Activated T-helper 1 cell treated with anti-CD3 and anti-CD28 coated beads, Interleukin-12 subunit alpha, Interleukin-12 subunit beta, Interleukin-2, Interleukin-4 antibody, amounts not matched to agents 30 ng/mL and 10 ng/mL and 1 ng/mL, durations not matched to agents 14 hours and 24 hours and 36 hours (primary cell): ENCODE measurements at regions of chr4 and their contacts with region 1.

Region 1: DNA sequence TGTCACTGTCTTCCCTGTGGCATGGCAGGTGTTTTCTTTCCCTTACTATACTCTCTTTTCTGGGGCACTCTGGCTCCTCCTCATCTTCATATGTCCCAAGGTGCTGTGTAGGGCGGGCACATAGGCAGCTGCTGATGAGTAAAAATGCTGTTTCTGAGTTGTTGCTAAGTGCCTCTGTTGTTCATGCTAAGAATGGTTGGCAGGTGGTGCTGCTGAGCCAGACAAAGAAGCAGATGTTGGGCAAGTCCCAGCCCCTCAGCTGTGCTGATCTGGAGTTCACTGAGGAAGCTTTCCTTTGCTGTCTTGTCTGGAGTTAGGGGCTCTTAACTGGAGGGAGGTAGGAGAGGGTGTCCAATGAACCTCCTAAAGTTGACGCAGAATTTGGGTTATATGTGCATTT is 40.6 kb downstream of the HADH start:
- DNase-seq: peak; percentile 69
- H3K4me3 Mint-ChIP-seq: peak overlapping the region; percentile 43
- H3K27ac Mint-ChIP-seq: peak overlapping the region; percentile 89
- H3K4me1 Mint-ChIP-seq: peaks cover 68% of the 10 kb centered on the region
- H3K27me3 Mint-ChIP-seq: no peaks in the 10 kb centered on the region

Region 2: GRCh38 chr4:108053251-108053711 is 22.9 kb after region 1 on chr4:
- intact Hi-C with region 1: loop called (anchors 1 kb)
- DNase-seq: no peak
- H3K4me3 Mint-ChIP-seq: peak overlapping the region; percentile 52
- H3K27ac Mint-ChIP-seq: peak overlapping the region; percentile 85
- H3K4me1 Mint-ChIP-seq: peaks cover 82% of the 10 kb centered on the region
- H3K27me3 Mint-ChIP-seq: no peaks in the 10 kb centered on the region

Region 3: GRCh38 chr4:108118490-108118889 is 88.2 kb after region 1 on chr4:
- intact Hi-C with region 1: loop called (anchors 2 kb)
- DNase-seq: no peak
- H3K4me3 Mint-ChIP-seq: peak overlapping the region; percentile 74
- H3K27ac Mint-ChIP-seq: peak overlapping the region; percentile 89
- H3K4me1 Mint-ChIP-seq: peaks cover 93% of the 10 kb centered on the region
- H3K27me3 Mint-ChIP-seq: no peaks in the 10 kb centered on the region

Region 4: DNA sequence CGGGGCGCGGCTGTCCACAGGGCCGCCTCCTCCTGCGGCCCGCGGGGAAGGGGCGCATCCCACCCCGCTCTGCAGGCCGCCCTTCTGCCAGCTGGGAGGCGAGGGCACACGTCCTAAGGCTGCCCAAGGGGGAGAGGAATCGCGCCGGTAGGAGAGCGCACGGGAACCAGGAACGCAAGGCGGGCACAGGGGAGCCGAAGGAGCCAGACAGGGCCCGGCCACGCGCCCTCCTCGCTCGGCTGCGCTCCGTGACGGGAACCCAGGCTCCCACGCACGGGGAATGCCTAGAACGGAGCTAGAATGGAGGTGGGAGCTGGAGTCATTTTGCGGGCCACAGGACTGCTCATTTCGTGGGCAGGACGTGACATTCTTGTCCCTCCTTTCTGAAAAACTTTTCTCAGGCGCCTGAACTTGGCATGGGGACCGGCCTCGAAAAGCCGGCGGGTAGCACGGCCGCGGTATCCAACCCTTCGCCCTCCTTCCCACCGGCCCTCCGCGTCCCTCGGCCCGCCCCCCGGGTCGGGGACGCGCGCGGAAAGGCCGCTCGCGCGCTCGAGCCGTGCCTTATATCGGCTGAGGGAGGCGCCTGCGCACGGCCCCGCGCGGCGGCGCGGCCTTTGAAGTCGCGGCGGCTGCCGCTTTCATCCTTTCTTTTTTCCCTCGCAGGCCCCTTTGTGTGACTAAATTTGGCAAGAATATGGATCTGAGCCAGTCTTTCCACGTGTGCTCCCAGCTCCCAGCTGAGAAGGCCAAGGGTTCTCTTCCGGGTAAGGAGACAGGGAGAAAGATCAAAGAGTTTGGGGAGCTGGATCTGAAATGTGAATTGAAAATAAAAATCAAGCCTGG is 142.6 kb after region 1 on chr4:
- intact Hi-C with region 1: loop called (anchors 1 kb)
- DNase-seq: peak; percentile 70
- H3K4me3 Mint-ChIP-seq: peak overlapping the region; percentile 91
- H3K27ac Mint-ChIP-seq: peak overlapping the region; percentile 94
- H3K4me1 Mint-ChIP-seq: peaks cover 61% of the 10 kb centered on the region
- H3K27me3 Mint-ChIP-seq: peaks cover 12% of the 10 kb centered on the region

Region 5: GRCh38 chr4:108483079-108483478 is 452.7 kb after region 1 on chr4:
- intact Hi-C with region 1: loop called (anchors 5 kb)
- DNase-seq: no peak
- H3K4me3 Mint-ChIP-seq: peak overlapping the region; percentile 46
- H3K27ac Mint-ChIP-seq: peak overlapping the region; percentile 37
- H3K4me1 Mint-ChIP-seq: peaks cover 56% of the 10 kb centered on the region
- H3K27me3 Mint-ChIP-seq: no peaks in the 10 kb centered on the region